ENCODE measurements at regions of chr12 and their contacts with region 1.

Region 1: DNA sequence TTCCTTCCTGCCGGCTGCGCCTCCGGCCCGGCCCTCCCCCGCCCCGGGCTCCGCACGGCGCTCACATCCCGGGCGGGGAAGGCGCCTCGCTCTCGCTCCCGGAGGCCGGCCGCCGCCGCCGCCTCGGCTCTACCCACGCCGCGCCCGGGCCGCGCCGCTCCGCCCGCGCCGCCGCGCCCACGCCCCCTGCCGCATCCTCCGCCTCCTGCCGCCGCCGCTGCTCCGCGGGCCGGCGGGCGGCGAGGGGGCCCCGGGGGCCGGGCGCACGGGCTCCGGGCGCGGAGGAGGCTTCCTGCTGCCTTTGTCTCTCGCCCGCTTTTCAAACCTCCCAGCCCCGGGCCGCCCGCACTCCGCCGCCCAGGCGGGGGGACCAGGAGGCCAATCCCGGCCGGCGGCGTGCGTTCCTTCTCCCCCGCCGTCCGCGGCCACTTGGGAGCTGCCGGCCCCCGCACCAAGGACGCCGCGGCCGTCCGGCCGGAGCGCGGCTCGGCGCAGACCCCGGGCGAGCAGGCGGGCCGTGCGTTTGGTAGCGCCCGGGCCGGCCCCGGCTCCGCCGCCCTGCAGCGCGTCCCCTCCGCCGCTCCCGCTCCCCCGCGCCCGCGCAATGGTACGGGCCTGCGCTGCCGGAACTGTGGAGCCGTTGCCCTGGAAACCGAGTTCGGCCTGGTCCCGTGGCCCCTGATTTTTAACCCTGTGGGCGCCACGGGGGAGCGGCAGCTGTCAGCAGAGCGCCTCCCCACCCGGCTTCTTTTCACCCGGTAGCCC is at the start of gene FBXL14:
- DNase-seq: peak; percentile 69
- H3K4me3 ChIP-seq: peak within 1 kb of the TSS; percentile 49 to 73 (median 69)
- H3K27ac ChIP-seq: peak within 1 kb of the TSS; percentile 53
- H3K4me1 ChIP-seq: peaks cover 43% of the 10 kb centered on the region
- H3K27me3 ChIP-seq: no peaks in the 10 kb centered on the region
- CTCF ChIP-seq: no peak
- total RNA-seq, gene FBXL14: 8.8 to 10.0 TPM

Region 2: DNA sequence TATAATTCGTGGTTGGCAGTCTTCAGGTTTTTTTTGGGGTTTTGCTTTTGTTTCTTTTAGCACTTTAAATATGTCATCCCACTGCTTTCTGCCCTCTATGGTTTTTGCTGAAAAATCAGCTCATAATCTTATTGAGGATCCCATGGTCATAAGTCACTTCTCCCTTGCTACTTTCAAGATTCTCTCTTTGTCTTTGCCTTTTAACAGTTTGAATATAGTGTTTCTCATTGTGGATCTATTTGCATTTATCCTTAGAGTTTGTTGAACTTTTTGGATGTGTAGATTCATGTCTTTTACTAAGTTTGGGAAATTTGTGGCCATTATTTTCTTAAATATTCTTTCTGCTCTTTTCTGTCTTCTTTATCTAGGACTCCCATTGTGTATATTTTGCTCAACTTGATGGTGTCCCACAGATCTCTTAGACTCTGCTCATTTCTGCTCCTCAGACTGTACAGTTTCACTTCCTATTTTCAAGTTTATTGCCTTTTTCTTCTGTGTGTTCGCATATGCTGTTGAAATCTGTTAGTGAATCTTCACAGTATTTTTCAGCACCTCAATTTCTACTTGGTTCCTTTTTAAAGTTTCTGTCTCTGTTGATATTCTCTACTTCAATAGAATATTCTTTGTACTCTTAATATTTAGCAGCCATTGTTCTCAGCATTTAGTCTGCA is 771.3 kb before region 1 on chr12:
- CTCF ChIA-PET with region 1: no interaction called
- dilution Hi-C with region 1: no loop called
- in situ Hi-C with region 1: loop called in 1 of 2 experiments (anchors 25 kb)
- intact Hi-C with region 1: no loop called
- DNase-seq: no peak
- H3K4me3 ChIP-seq: no peak overlapping the region
- H3K27ac ChIP-seq: no peak overlapping the region
- H3K4me1 ChIP-seq: no peaks in the 10 kb centered on the region
- H3K27me3 ChIP-seq: no peaks in the 10 kb centered on the region
- CTCF ChIP-seq: no peak

Region 3: GRCh38 chr12:1533602-1534304 is 60.7 kb before region 1 on chr12:
- CTCF ChIA-PET with region 1: no interaction called
- dilution Hi-C with region 1: no loop called
- in situ Hi-C with region 1: no loop called
- intact Hi-C with region 1: no loop called
- DNase-seq: peak; percentile 49
- H3K4me3 ChIP-seq: no peak overlapping the region
- H3K27ac ChIP-seq: no peak overlapping the region
- H3K4me1 ChIP-seq: peaks cover 7% of the 10 kb centered on the region
- H3K27me3 ChIP-seq: no peaks in the 10 kb centered on the region
- CTCF ChIP-seq: no peak

Region 4: DNA sequence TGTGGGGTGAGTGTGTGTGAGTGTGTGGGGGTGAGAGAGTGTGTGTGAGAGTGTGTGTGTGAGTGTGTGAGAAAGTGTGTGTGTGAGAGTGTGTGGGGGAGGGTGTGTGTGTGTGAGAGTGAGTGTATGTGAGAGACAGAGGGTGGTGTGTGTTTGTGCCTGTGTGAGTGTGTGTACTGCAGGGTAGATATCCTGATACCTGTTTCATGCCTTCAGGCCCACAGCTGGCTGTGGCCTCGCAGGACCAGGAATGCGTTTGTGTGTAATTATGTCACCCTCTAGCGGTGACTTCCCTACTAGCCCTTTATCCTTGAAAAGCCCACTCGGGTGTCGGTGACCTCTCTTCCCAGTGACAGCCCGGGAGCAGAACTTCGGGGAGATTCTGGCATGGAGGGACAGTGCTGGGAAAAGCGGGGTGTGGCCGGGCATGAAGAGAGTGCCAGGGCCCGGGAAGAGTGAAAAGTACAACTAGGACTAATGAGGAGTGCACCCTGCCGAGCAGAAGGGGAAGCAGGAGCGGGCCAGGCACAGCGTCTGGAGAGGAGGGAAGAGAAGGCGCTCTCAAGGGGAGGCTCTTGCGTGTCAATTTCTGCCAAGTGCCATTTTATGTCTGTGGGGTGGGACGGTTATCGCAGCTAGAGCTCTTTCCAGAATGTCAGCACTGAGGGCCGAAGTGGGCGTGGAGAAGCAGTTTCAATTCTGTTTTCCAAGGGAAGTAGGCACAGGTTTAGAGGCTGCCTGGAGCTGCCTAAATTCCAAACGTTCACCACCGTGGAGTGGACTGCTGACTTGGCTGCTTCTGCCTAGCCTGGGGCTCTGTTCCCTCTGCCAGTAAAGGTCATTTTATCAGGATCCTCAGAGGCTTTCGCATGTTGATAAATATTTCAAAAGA is 10.9 kb after region 1 on chr12:
- CTCF ChIA-PET with region 1: no interaction called
- dilution Hi-C with region 1: no loop called
- in situ Hi-C with region 1: no loop called
- intact Hi-C with region 1: loop called (anchors 1 kb)
- DNase-seq: peak; percentile 77
- H3K4me3 ChIP-seq: peak overlapping the region; percentile 30 to 47 (median 41)
- H3K27ac ChIP-seq: peak overlapping the region; percentile 61
- H3K4me1 ChIP-seq: peaks cover 23% of the 10 kb centered on the region
- H3K27me3 ChIP-seq: no peaks in the 10 kb centered on the region
- CTCF ChIP-seq: peak; percentile 70 to 80